A549 (cell line): ENCODE measurements at regions of chr1 and their contacts with region 1.

Region 1: DNA sequence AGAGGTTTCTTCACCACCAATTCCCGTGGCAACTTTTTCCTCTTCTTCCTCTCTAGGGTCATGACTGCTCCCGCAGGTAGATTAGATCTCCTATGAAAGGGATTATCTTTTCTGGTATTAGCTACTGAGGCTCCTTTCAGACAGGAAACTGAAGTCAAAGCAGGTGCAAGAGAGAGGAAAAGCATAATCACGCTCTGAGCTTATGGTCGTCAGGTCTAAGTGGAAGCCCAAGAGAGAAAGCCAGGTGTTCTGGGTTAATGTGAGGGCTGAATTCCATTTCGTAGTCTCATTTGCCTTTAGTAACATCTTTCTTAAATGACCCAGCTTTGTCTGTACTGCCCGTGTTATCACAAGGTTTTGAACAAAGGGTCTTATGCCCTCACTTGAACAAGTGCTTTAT is 8.3 kb upstream of the MAP3K21 start:
- DNase-seq: no peak
- ATAC-seq: no peak
- H3K4me3 ChIP-seq: no peak overlapping the region
- H3K27ac ChIP-seq: no peak overlapping the region
- H3K4me1 ChIP-seq: peaks cover 38% of the 10 kb centered on the region
- CTCF ChIP-seq: no peak
- EP300 ChIP-seq: no peak
- POLR2A ChIP-seq: no peak
- RAD21 ChIP-seq: no peak

Region 2: GRCh38 chr1:233097959-233098580 is 221.2 kb before region 1 on chr1:
- CTCF ChIA-PET with region 1: no interaction called
- POLR2A ChIA-PET with region 1: no interaction called
- DNase-seq: peak in 1 of 2 experiments; percentile 37
- ATAC-seq: peak; percentile 54 to 57; a peak in 3 of 6 replicates
- H3K4me3 ChIP-seq: no peak overlapping the region
- H3K27ac ChIP-seq: peak overlapping the region; percentile 51 to 72; a peak in 5 of 6 replicates
- H3K4me1 ChIP-seq: peaks cover 23% of the 10 kb centered on the region
- CTCF ChIP-seq: no peak
- EP300 ChIP-seq: no peak; a peak in 1 of 5 replicates
- POLR2A ChIP-seq: no peak
- RAD21 ChIP-seq: 0 out of 5 replicates have a peak, but pooled peaks of 1 of the 2 experiments have one; percentile 13

Region 3: GRCh38 chr1:233113009-233113879 is 206.0 kb before region 1 on chr1:
- CTCF ChIA-PET with region 1: no interaction called
- POLR2A ChIA-PET with region 1: interaction called, 10 read pairs
- DNase-seq: peak; percentile 82 to 100
- ATAC-seq: peak; percentile 93 to 96
- H3K4me3 ChIP-seq: peak overlapping the region; percentile 17; the same call in 1 of the 3 replicates
- H3K27ac ChIP-seq: peak overlapping the region; percentile 93
- H3K4me1 ChIP-seq: peaks cover 46% of the 10 kb centered on the region
- CTCF ChIP-seq: no peak
- EP300 ChIP-seq: peak; percentile 97; a peak in 4 of 5 replicates
- POLR2A ChIP-seq: no peak
- RAD21 ChIP-seq: peak; percentile 34 to 66; a peak in 4 of 5 replicates

Region 4: GRCh38 chr1:233304489-233305102 is 14.7 kb before region 1 on chr1:
- CTCF ChIA-PET with region 1: interaction called, 51 read pairs
- POLR2A ChIA-PET with region 1: no interaction called
- DNase-seq: peak in 1 of 2 experiments; percentile 38
- ATAC-seq: peak in 1 of 2 experiments; percentile 61; a peak in 2 of 6 replicates
- H3K4me3 ChIP-seq: no peak overlapping the region
- H3K27ac ChIP-seq: no peak overlapping the region
- H3K4me1 ChIP-seq: 0 out of 3 replicates have a peak, but pooled peaks cover 3% of the 10 kb centered on the region
- CTCF ChIP-seq: peak; percentile 95
- EP300 ChIP-seq: no peak
- POLR2A ChIP-seq: no peak
- RAD21 ChIP-seq: peak; percentile 91 to 94